ENCODE measurements at regions of chr19 and their contacts with region 1.

Region 1: DNA sequence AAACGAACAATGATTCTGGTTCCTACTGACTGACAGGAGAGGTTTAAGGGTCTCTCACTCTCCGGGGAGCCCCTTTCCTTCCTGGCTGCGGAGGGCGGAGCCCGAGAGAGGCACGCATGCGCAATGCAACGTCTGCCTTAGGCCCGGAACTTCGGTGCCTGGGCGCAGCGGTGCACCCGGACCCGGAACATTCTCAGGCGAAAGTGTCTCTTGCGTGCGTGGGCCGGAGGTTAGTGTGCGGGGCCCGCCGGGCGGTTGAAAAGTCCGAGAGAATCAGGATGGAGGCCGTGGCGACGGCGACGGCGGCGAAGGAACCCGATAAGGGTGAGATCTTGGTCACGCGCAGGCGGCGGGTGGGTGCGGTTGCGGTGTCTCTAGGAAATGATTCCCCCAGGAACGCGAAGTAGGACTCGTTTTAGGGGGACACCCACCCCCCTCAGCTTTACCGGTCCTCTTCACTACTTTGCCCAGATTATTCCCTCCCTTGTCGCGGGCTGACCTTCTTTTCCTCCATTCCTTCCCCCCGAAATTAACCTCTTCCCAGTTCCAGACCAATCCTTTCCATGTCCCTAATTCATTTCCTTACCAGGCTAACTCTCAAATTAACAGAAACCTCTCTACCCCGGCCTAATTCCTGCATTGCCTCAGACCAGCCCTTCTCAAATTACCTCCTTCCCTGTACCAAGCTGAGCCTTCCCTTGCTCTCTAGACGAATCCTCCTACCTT is at the start of gene CCDC97:
- DNase-seq: peak; percentile 75
- ATAC-seq: peak; percentile 76
- H3K4me3 ChIP-seq: peak within 1 kb of the TSS; percentile 79 to 92
- H3K27ac ChIP-seq: peak within 1 kb of the TSS; percentile 88
- H3K4me1 ChIP-seq: peaks cover 12 to 25% of the 10 kb centered on the region in 2 experiments
- H3K27me3 ChIP-seq: no peaks in the 10 kb centered on the region
- CTCF ChIP-seq: no peak
- POLR2A ChIP-seq: peak; percentile 88
- RAD21 ChIP-seq: no peak
- total RNA-seq, gene CCDC97: 23.0 TPM

Region 2: DNA sequence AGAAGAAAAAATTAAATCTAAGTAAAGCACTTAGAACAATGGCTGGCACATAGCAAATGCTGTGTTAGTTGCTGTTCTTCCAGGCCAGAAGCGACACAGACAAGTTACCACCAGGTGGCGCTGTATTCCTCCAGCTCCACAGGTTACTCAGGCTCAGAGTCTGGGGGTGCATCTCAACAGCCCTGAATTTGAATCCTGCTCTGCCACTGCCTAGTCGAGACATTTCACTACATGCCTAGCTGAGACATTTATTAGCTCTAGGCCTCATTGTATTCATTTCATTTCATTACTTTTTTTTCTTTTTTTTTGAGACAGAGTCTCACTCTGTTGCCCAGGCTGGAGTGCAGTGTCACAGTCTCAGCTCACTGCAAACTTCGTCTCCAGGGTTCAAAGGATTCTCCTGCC is 335.6 kb before region 1 on chr19:
- CTCF ChIA-PET with region 1: interaction called, 3 read pairs
- POLR2A ChIA-PET with region 1: no interaction called
- RAD21 ChIA-PET with region 1: no interaction called
- intact Hi-C with region 1: loop called (anchors 2 kb)
- DNase-seq: peak; percentile 64
- ATAC-seq: peak; percentile 98
- H3K4me3 ChIP-seq: no peak overlapping the region
- H3K27ac ChIP-seq: no peak overlapping the region
- H3K4me1 ChIP-seq: no peaks in the 10 kb centered on the region
- H3K27me3 ChIP-seq: peaks cover 30% of the 10 kb centered on the region; the same call in 1 of the 2 replicates
- CTCF ChIP-seq: peak; percentile 75 to 88 (median 76)
- POLR2A ChIP-seq: no peak
- RAD21 ChIP-seq: peak; percentile 85

Region 3: DNA sequence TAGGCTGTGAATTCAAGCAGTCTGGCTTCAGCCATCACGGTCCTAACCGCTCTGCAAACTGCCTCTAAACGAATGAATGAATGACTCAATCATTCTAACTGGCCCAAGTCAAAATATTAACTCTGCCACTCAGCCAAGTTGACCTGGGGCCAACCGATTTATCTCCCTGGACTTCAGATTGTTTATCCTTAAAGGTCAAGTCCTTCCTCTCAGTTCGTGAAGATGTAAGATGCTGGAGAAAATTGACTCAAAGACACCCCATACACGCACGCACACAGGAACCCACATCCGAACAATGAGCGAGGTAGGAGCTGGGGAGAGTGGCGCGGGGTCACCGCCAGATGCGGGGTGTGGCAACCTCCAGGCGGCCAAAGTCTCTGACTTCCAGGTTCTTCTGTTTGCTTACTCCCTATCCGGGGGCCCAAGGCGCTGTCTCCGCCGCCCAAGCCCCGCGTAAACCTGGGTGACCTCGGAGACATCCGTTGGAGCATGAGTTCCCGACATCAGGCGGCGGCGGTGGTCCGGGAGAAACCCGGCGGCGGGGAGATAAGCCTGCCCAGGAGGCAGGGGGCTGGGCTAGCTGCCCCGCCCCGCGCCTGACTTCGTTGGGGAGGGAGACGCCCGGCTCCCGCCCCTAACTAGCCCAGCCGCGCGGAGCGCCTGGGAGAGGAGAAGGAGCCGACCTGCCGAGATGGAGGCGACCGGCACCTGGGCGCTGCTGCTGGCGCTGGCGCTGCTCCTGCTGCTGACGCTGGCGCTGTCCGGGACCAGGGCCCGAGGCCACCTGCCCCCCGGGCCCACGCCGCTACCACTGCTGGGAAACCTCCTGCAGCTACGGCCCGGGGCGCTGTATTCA is 117.4 kb before region 1 on chr19 and contains the start of gene CYP2S1:
- CTCF ChIA-PET with region 1: no interaction called
- POLR2A ChIA-PET with region 1: no interaction called
- RAD21 ChIA-PET with region 1: no interaction called
- intact Hi-C with region 1: no loop called
- DNase-seq: peak; percentile 15
- ATAC-seq: peak; percentile 95
- H3K4me3 ChIP-seq: peak within 1 kb of the TSS; percentile 75 to 79
- H3K27ac ChIP-seq: peak within 1 kb of the TSS; percentile 78
- H3K4me1 ChIP-seq: peaks cover 12 to 23% of the 10 kb centered on the region in 2 experiments
- H3K27me3 ChIP-seq: no peaks in the 10 kb centered on the region
- CTCF ChIP-seq: peak in 1 of 3 experiments; percentile 13; a peak in 1 of 6 replicates
- POLR2A ChIP-seq: no peak
- RAD21 ChIP-seq: 0 out of 2 replicates have a peak, but pooled peaks have one; percentile 10
- total RNA-seq, gene CYP2S1: 17.6 TPM

Region 4: GRCh38 chr19:41206926-41207750 is 103.1 kb before region 1 on chr19:
- CTCF ChIA-PET with region 1: interaction called, 22 read pairs
- POLR2A ChIA-PET with region 1: no interaction called
- RAD21 ChIA-PET with region 1: no interaction called
- intact Hi-C with region 1: loop called (anchors 1 kb)
- DNase-seq: no peak
- ATAC-seq: no peak
- H3K4me3 ChIP-seq: no peak overlapping the region
- H3K27ac ChIP-seq: no peak overlapping the region
- H3K4me1 ChIP-seq: 0 out of 4 replicates have a peak, but pooled peaks cover 0 to 3% of the 10 kb centered on the region in 2 experiments
- H3K27me3 ChIP-seq: no peaks in the 10 kb centered on the region
- CTCF ChIP-seq: no peak
- POLR2A ChIP-seq: no peak
- RAD21 ChIP-seq: no peak

Region 5: DNA sequence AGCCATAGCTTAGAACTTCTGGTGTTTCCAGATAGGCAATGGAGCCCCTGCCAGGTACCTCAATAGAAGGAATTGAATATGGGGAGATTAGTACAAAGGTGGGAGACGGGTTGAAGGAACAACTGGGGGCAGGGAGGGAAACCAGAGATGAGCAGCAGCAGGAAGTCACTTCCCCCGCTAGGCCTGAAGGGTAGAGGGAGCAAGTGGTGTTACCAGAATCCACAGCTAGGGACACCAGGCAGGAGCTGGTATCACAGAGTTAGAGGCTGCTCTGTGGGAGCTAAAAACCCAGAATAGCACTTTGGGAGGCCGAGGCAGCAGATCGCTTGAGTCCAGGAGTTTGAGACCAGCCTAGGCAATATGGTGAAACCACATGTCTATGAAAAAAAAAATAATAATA is 61.3 kb before region 1 on chr19:
- CTCF ChIA-PET with region 1: no interaction called
- POLR2A ChIA-PET with region 1: no interaction called
- RAD21 ChIA-PET with region 1: no interaction called
- intact Hi-C with region 1: no loop called
- DNase-seq: no peak
- ATAC-seq: peak; percentile 51; the same call in 1 of the 2 replicates
- H3K4me3 ChIP-seq: no peak overlapping the region
- H3K27ac ChIP-seq: no peak overlapping the region
- H3K4me1 ChIP-seq: no peaks in the 10 kb centered on the region
- H3K27me3 ChIP-seq: no peaks in the 10 kb centered on the region
- CTCF ChIP-seq: no peak
- POLR2A ChIP-seq: no peak
- RAD21 ChIP-seq: no peak

Region 6: GRCh38 chr19:41321600-41322270 is 11.5 kb after region 1 on chr19:
- CTCF ChIA-PET with region 1: interaction called, 10 read pairs
- POLR2A ChIA-PET with region 1: no interaction called
- RAD21 ChIA-PET with region 1: no interaction called
- intact Hi-C with region 1: no loop called
- DNase-seq: no peak
- ATAC-seq: peak; percentile 74
- H3K4me3 ChIP-seq: no peak overlapping the region
- H3K27ac ChIP-seq: peak overlapping the region; percentile 29; the same call in 1 of the 2 replicates
- H3K4me1 ChIP-seq: peaks cover 5 to 24% of the 10 kb centered on the region in 2 experiments; a peak in 3 of 4 replicates
- H3K27me3 ChIP-seq: no peaks in the 10 kb centered on the region
- CTCF ChIP-seq: peak; percentile 56 to 82 (median 68); a peak in 5 of 6 replicates
- POLR2A ChIP-seq: no peak
- RAD21 ChIP-seq: peak; percentile 44

Region 7: GRCh38 chr19:41353466-41354342 is 43.5 kb after region 1 on chr19 and contains the start of gene TGFB1:
- CTCF ChIA-PET with region 1: interaction called, 4 read pairs
- POLR2A ChIA-PET with region 1: no interaction called
- RAD21 ChIA-PET with region 1: no interaction called
- intact Hi-C with region 1: loop called (anchors 2 kb)
- DNase-seq: peak; percentile 63
- ATAC-seq: peak; percentile 70
- H3K4me3 ChIP-seq: peak within 1 kb of the TSS; percentile 79 to 87
- H3K27ac ChIP-seq: peak within 1 kb of the TSS; percentile 89
- H3K4me1 ChIP-seq: peaks cover 11 to 29% of the 10 kb centered on the region in 2 experiments; a peak in 3 of 4 replicates
- H3K27me3 ChIP-seq: no peaks in the 10 kb centered on the region
- CTCF ChIP-seq: peak; percentile 56 to 88 (median 81); a peak in 5 of 6 replicates
- POLR2A ChIP-seq: no peak
- RAD21 ChIP-seq: no peak
- total RNA-seq, gene TGFB1: 54.6 TPM

Region 8: DNA sequence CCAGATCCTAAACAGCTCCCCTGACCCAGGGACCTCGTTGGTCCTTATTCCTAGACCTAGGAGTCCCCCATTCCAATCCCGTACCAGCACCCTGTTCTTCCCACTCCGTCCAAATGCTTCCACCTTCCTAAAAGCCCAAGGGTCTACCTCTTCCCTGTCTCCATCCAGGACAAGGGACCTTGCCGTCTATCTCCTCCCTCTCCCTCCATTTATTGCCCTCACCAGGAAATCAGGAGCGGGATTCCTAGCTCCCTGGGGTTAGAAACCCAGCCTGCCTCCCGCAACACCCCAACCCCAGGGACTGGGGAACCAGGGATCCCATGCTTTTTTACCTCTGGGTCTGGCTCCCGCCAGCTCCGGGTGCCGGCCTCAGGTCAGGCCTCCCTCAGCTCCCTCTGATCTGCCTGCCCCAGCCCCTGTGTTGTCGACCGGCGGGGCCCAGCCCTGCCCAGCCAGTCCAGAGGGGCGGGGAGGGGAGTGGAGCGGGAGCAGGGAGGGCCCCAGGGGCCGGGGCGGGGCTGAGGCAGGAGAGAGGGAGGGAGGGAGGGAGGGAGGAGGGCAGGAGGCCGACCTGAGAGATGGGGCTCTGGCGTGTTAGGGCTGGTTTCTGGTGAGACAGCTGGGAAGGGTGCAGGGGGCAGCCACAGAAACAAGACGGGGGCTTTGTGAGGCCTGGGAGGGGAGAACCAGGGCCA is 116.9 kb after region 1 on chr19 and contains the start of gene B3GNT8:
- CTCF ChIA-PET with region 1: no interaction called
- POLR2A ChIA-PET with region 1: no interaction called
- RAD21 ChIA-PET with region 1: no interaction called
- intact Hi-C with region 1: no loop called
- DNase-seq: no peak
- ATAC-seq: peak; percentile 68
- H3K4me3 ChIP-seq: no peak within 1 kb of the TSS
- H3K27ac ChIP-seq: no peak within 1 kb of the TSS
- H3K4me1 ChIP-seq: peaks cover 0 to 5% of the 10 kb centered on the region in 2 experiments; a peak in 2 of 4 replicates
- H3K27me3 ChIP-seq: no peaks in the 10 kb centered on the region
- CTCF ChIP-seq: no peak
- POLR2A ChIP-seq: no peak
- RAD21 ChIP-seq: no peak
- total RNA-seq, gene B3GNT8: not detected

Measured in HCT116 (cell line).